HCT116 (cell line): ENCODE measurements at regions of chr4 and their contacts with region 1.

Region 1: DNA sequence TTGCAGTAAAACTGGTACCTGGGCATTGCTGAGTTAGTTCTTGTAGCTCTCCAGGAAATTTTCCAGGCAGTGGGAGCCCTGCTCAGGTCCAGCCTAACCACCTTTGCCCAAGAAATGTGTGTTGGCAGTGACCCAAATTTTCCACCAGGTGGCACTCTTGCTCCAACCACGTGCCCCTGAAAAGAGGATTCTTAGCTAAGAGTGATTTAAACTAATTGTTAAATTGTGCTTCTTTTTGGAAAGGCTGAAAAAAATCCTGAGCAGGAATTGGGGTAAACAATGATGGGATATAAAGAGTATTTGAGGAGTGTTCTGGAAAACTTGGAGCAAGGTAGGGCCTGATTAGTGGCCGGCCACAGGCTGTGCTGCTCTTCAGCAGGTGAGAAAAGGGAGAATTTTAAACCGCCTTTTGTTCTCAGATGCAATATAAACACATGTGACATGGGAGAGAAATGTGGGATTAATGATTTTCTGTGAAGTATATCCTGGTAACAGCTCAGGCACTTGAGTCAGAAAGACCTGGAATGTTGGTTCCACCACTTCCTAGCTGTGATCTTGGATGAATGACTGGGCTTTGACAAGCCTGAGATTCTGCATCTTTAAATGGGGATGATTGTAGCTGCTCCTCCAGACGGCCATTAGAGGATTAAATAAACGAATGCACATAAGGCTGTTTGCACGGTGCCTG is 219.6 kb downstream of the PTTG2 start:
- DNase-seq: no peak
- ATAC-seq: peak; percentile 83
- H3K4me3 ChIP-seq: no peak overlapping the region
- H3K27ac ChIP-seq: 0 out of 2 replicates have a peak overlapping the region, but pooled peaks have one; percentile 6
- H3K4me1 ChIP-seq: peaks cover 15 to 18% of the 10 kb centered on the region in 2 experiments
- H3K27me3 ChIP-seq: no peaks in the 10 kb centered on the region
- CTCF ChIP-seq: peak; percentile 86 to 99 (median 96)
- POLR2A ChIP-seq: no peak
- RAD21 ChIP-seq: peak; percentile 99

Region 2: DNA sequence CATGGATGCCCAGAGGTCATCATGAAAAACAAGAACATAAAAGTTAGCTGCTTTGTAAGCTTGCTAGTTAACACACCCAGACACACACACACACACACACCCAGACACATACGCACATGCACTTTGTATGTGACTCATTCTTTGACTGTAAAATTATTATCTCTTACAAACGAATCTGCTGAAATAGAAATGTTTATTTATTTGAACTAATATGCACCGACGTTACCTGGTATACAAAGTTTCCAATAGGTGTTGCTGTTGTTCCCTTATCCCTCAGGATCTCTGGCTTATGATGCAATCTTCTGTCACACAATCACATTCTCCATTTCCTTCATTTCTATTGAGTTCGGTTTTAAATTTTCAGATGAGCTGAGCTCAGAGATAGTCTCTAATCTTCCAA is 10.3 kb before region 1 on chr4:
- CTCF ChIA-PET with region 1: interaction called, 14 read pairs
- POLR2A ChIA-PET with region 1: no interaction called
- RAD21 ChIA-PET with region 1: no interaction called
- intact Hi-C with region 1: no loop called
- DNase-seq: no peak
- ATAC-seq: peak; percentile 81
- H3K4me3 ChIP-seq: no peak overlapping the region
- H3K27ac ChIP-seq: no peak overlapping the region
- H3K4me1 ChIP-seq: peaks cover 2 to 17% of the 10 kb centered on the region in 2 experiments; a peak in 2 of 4 replicates
- H3K27me3 ChIP-seq: no peaks in the 10 kb centered on the region
- CTCF ChIP-seq: peak; percentile 28 to 42 (median 39); a peak in 2 of 6 replicates
- POLR2A ChIP-seq: no peak
- RAD21 ChIP-seq: peak; percentile 71

Region 3: GRCh38 chr4:38195911-38196310 is 16.1 kb after region 1 on chr4:
- CTCF ChIA-PET with region 1: no interaction called
- POLR2A ChIA-PET with region 1: no interaction called
- RAD21 ChIA-PET with region 1: no interaction called
- intact Hi-C with region 1: no loop called
- DNase-seq: no peak
- ATAC-seq: no peak
- H3K4me3 ChIP-seq: no peak overlapping the region
- H3K27ac ChIP-seq: no peak overlapping the region
- H3K4me1 ChIP-seq: peaks cover 3 to 4% of the 10 kb centered on the region in 2 experiments
- H3K27me3 ChIP-seq: no peaks in the 10 kb centered on the region
- CTCF ChIP-seq: no peak
- POLR2A ChIP-seq: no peak
- RAD21 ChIP-seq: no peak

Region 4: GRCh38 chr4:38319456-38320342 is 139.9 kb after region 1 on chr4:
- CTCF ChIA-PET with region 1: interaction called, 37 read pairs
- POLR2A ChIA-PET with region 1: interaction called, 10 read pairs
- RAD21 ChIA-PET with region 1: interaction called, 4 to 14 read pairs
- intact Hi-C with region 1: no loop called
- DNase-seq: no peak
- ATAC-seq: peak; percentile 70
- H3K4me3 ChIP-seq: peak overlapping the region in 1 of 2 experiments; percentile 29; a peak in 2 of 4 replicates
- H3K27ac ChIP-seq: peak overlapping the region; percentile 63
- H3K4me1 ChIP-seq: peaks cover 19 to 43% of the 10 kb centered on the region in 2 experiments
- H3K27me3 ChIP-seq: no peaks in the 10 kb centered on the region
- CTCF ChIP-seq: peak; percentile 72 to 99 (median 98)
- POLR2A ChIP-seq: no peak
- RAD21 ChIP-seq: peak; percentile 92

Region 5: GRCh38 chr4:38730830-38731646 is 551.2 kb after region 1 on chr4:
- CTCF ChIA-PET with region 1: interaction called, 93 read pairs
- POLR2A ChIA-PET with region 1: interaction called, 6 read pairs
- RAD21 ChIA-PET with region 1: interaction called, 12 to 16 read pairs
- intact Hi-C with region 1: loop called (anchors 1 kb)
- DNase-seq: peak; percentile 50
- ATAC-seq: peak; percentile 64
- H3K4me3 ChIP-seq: 0 out of 4 replicates have a peak overlapping the region, but pooled peaks of 1 of the 2 experiments have one; percentile 5
- H3K27ac ChIP-seq: no peak overlapping the region
- H3K4me1 ChIP-seq: peaks cover 22 to 30% of the 10 kb centered on the region in 2 experiments
- H3K27me3 ChIP-seq: no peaks in the 10 kb centered on the region
- CTCF ChIP-seq: peak; percentile 82 to 99 (median 96)
- POLR2A ChIP-seq: no peak
- RAD21 ChIP-seq: peak; percentile 96

Region 6: GRCh38 chr4:38856524-38857337 is 676.9 kb after region 1 on chr4 and contains the start of gene TLR6:
- CTCF ChIA-PET with region 1: interaction called, 5 read pairs
- POLR2A ChIA-PET with region 1: no interaction called
- RAD21 ChIA-PET with region 1: no interaction called
- intact Hi-C with region 1: loop called (anchors 5 kb)
- DNase-seq: peak; percentile 80
- ATAC-seq: peak; percentile 4; the same call in 1 of the 2 replicates
- H3K4me3 ChIP-seq: peak within 1 kb of the TSS; percentile 41 to 57
- H3K27ac ChIP-seq: peak within 1 kb of the TSS; percentile 84
- H3K4me1 ChIP-seq: peaks cover 19 to 49% of the 10 kb centered on the region in 2 experiments
- H3K27me3 ChIP-seq: no peaks in the 10 kb centered on the region
- CTCF ChIP-seq: peak; percentile 58 to 78 (median 64); a peak in 5 of 6 replicates
- POLR2A ChIP-seq: no peak
- RAD21 ChIP-seq: peak; percentile 53
- total RNA-seq, gene TLR6: 4.8 TPM

Region 7: DNA sequence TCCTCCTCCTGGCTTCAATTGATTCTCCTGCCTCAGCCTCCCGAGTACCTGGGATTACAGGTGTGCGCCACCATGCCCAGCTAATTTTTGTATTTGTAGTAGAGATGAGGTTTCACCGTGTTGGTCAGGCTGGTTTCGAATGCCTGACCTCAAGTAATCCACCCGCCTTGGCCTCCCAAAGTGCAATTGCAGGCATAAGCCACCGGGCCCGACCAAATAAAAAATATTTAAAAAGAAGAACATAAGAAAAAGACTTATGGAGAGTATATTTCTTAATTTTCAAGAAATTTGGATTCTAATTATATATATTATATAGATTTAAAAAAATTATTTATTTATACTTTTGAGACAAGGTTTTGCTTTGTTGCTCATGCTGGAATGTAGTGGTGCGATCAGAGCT is 1906.6 kb after region 1 on chr4:
- CTCF ChIA-PET with region 1: no interaction called
- POLR2A ChIA-PET with region 1: no interaction called
- RAD21 ChIA-PET with region 1: no interaction called
- intact Hi-C with region 1: no loop called
- DNase-seq: no peak
- ATAC-seq: no peak
- H3K4me3 ChIP-seq: no peak overlapping the region
- H3K27ac ChIP-seq: no peak overlapping the region
- H3K4me1 ChIP-seq: no peaks in the 10 kb centered on the region
- H3K27me3 ChIP-seq: no peaks in the 10 kb centered on the region
- CTCF ChIP-seq: no peak
- POLR2A ChIP-seq: no peak
- RAD21 ChIP-seq: no peak